Activated CD4-positive, alpha-beta T cell treated with anti-CD3 and anti-CD28 coated beads for 36 hours (primary cell): ENCODE measurements at regions of chr6 and their contacts with region 1.

Region 1: GRCh38 chr6:142155895-142156757 is 9.1 kb downstream of the VTA1 start:
- DNase-seq: no peak
- ATAC-seq: peak; percentile 55
- H3K4me3 Mint-ChIP-seq: no peak overlapping the region
- H3K27ac Mint-ChIP-seq: peak overlapping the region; percentile 37
- H3K4me1 Mint-ChIP-seq: peaks cover 56% of the 10 kb centered on the region
- H3K27me3 Mint-ChIP-seq: no peaks in the 10 kb centered on the region

Region 2: GRCh38 chr6:142183351-142183750 is 27.2 kb after region 1 on chr6:
- CTCF ChIA-PET with region 1: interaction called, 11 read pairs
- POLR2A ChIA-PET with region 1: no interaction called
- intact Hi-C with region 1: no loop called
- DNase-seq: no peak
- ATAC-seq: no peak
- H3K4me3 Mint-ChIP-seq: no peak overlapping the region
- H3K27ac Mint-ChIP-seq: no peak overlapping the region
- H3K4me1 Mint-ChIP-seq: peaks cover 2% of the 10 kb centered on the region
- H3K27me3 Mint-ChIP-seq: no peaks in the 10 kb centered on the region